ENCODE measurements at regions of chr1 and their contacts with region 1.

Region 1: GRCh38 chr1:28886731-28887418 is 27.5 kb upstream of the EPB41 start:
- DNase-seq: peak; percentile 81 to 95 (median 89)
- ATAC-seq: peak; percentile 73
- H3K4me3 ChIP-seq: peak overlapping the region; percentile 99
- H3K4me3 Mint-ChIP-seq: peak overlapping the region; percentile 95
- H3K27ac ChIP-seq: peak overlapping the region; percentile 57 to 76
- H3K27ac Mint-ChIP-seq: peak overlapping the region; percentile 84
- H3K4me1 ChIP-seq: peaks cover 68% of the 10 kb centered on the region
- H3K4me1 Mint-ChIP-seq: peaks cover 51% of the 10 kb centered on the region
- H3K27me3 ChIP-seq: no peaks in the 10 kb centered on the region
- H3K27me3 Mint-ChIP-seq: peaks cover 5% of the 10 kb centered on the region
- CTCF ChIP-seq: no peak

Region 2: GRCh38 chr1:28926629-28927265 is 39.9 kb after region 1 on chr1:
- CTCF ChIA-PET with region 1: interaction called, 8 read pairs
- POLR2A ChIA-PET with region 1: interaction called, 22 read pairs
- intact Hi-C with region 1: loop called (anchors 2 to 5 kb)
- DNase-seq: peak in 8 of 14 experiments; percentile 28 to 92 (median 40)
- ATAC-seq: peak; percentile 82
- H3K4me3 ChIP-seq: peak overlapping the region; percentile 32
- H3K4me3 Mint-ChIP-seq: peak overlapping the region; percentile 78
- H3K27ac ChIP-seq: peak overlapping the region; percentile 71 to 75
- H3K27ac Mint-ChIP-seq: peak overlapping the region; percentile 85
- H3K4me1 ChIP-seq: peaks cover 68% of the 10 kb centered on the region
- H3K4me1 Mint-ChIP-seq: peaks cover 67% of the 10 kb centered on the region
- H3K27me3 ChIP-seq: no peaks in the 10 kb centered on the region
- H3K27me3 Mint-ChIP-seq: no peaks in the 10 kb centered on the region
- CTCF ChIP-seq: no peak

Region 3: DNA sequence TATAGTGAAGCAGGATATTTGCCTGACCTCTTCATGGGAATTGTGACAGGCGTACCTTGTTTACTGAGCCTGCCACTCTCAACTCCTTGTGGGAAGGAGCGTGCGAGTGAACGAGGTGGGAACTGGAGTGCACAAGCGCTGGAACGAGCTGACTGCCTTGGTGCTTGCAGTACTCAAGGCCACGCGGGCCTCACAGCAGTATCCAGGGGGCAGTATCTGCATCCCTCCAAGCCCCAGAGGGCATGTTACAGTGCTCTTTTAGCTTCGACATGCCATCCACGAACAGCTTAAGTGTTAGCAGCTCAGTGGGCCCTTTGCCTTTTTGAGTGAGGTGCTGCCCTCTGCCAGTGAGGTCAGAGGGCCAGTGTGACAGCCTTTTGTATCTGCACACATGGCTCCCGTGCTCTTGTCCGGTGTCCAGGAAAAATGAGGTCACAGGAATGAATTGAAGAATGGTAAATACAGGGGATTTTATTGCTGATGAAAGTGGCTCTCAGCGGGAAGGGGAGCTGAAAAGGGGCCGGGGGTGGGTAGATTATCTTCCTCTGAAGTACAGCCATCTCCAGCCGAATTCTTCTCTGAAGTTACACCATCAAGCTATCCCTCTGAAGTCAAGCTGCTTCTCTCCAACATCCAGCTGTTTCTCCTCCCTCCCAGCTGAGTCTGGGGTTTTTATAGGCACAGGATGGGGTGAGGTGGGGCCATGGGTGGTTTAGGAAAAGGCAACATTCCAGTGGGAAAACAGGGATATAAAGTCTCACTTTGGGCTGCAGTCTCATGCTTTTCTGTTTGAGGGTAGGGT is 96.8 kb after region 1 on chr1:
- CTCF ChIA-PET with region 1: interaction called, 15 read pairs
- POLR2A ChIA-PET with region 1: interaction called, 3 read pairs
- intact Hi-C with region 1: loop called (anchors 1 to 2 kb)
- DNase-seq: peak in 8 of 14 experiments; percentile 1 to 45 (median 16)
- ATAC-seq: peak; percentile 43
- H3K4me3 ChIP-seq: no peak overlapping the region
- H3K4me3 Mint-ChIP-seq: no peak overlapping the region
- H3K27ac ChIP-seq: no peak overlapping the region
- H3K27ac Mint-ChIP-seq: peak overlapping the region; percentile 5
- H3K4me1 ChIP-seq: peaks cover 34% of the 10 kb centered on the region
- H3K4me1 Mint-ChIP-seq: peaks cover 79% of the 10 kb centered on the region
- H3K27me3 ChIP-seq: no peaks in the 10 kb centered on the region
- H3K27me3 Mint-ChIP-seq: no peaks in the 10 kb centered on the region
- CTCF ChIP-seq: peak; percentile 20

Region 4: DNA sequence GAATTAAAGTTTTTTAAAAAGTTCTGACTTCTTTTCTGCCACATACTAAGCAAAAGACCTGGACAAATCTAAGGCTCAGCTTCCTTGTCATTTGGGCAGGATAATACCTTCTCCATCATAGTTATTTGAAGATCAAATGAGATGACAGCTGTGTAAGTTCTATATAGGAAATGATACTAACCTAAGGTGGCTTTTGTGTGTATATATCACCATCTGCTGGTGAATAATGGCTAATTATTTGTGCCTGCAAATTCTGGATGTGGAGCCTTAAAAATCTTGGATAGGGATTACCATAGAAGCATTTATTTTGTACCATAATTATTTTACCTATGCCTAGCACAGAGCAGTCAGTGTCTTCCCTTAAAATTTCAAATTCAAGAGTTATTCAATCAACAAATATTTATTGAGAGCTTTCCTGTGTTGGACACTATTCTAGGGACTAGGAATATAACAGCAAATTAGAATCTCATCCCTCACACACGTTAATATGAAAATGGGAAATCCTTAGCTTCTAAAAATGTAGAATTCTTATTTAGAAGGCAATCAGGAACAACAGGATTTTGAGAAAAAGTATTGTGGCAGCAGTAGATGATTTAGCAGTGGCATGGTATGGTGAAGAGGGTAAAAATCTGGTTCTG is 147.1 kb after region 1 on chr1:
- CTCF ChIA-PET with region 1: interaction called, 113 read pairs
- POLR2A ChIA-PET with region 1: interaction called, 14 read pairs
- intact Hi-C with region 1: loop called (anchors 1 kb)
- DNase-seq: peak in 3 of 14 experiments; percentile 56 to 62 (median 60)
- ATAC-seq: peak; percentile 57
- H3K4me3 ChIP-seq: no peak overlapping the region
- H3K4me3 Mint-ChIP-seq: no peak overlapping the region
- H3K27ac ChIP-seq: no peak overlapping the region
- H3K27ac Mint-ChIP-seq: no peak overlapping the region
- H3K4me1 ChIP-seq: no peaks in the 10 kb centered on the region
- H3K4me1 Mint-ChIP-seq: peaks cover 8% of the 10 kb centered on the region
- H3K27me3 ChIP-seq: no peaks in the 10 kb centered on the region
- H3K27me3 Mint-ChIP-seq: no peaks in the 10 kb centered on the region
- CTCF ChIP-seq: peak; percentile 78

Region 5: GRCh38 chr1:29124366-29125236 is 237.7 kb after region 1 on chr1:
- CTCF ChIA-PET with region 1: no interaction called
- POLR2A ChIA-PET with region 1: no interaction called
- intact Hi-C with region 1: loop called in 1 of 2 experiments (anchors 2 kb)
- DNase-seq: peak; percentile 20 to 69 (median 42)
- ATAC-seq: peak; percentile 55
- H3K4me3 ChIP-seq: peak overlapping the region; percentile 61
- H3K4me3 Mint-ChIP-seq: peak overlapping the region; percentile 48
- H3K27ac ChIP-seq: no peak overlapping the region
- H3K27ac Mint-ChIP-seq: no peak overlapping the region
- H3K4me1 ChIP-seq: peaks cover 41% of the 10 kb centered on the region
- H3K4me1 Mint-ChIP-seq: peaks cover 8% of the 10 kb centered on the region
- H3K27me3 ChIP-seq: peaks cover 25 to 44% of the 10 kb centered on the region in 2 experiments
- H3K27me3 Mint-ChIP-seq: peaks cover 26% of the 10 kb centered on the region
- CTCF ChIP-seq: no peak

Region 6: GRCh38 chr1:29202584-29203340 is 315.9 kb after region 1 on chr1:
- CTCF ChIA-PET with region 1: interaction called, 5 read pairs
- POLR2A ChIA-PET with region 1: interaction called, 4 read pairs
- intact Hi-C with region 1: loop called (anchors 1 kb)
- DNase-seq: peak; percentile 79 to 94 (median 88)
- ATAC-seq: peak; percentile 93
- H3K4me3 ChIP-seq: no peak overlapping the region
- H3K4me3 Mint-ChIP-seq: no peak overlapping the region
- H3K27ac ChIP-seq: no peak overlapping the region
- H3K27ac Mint-ChIP-seq: no peak overlapping the region
- H3K4me1 ChIP-seq: peaks cover 3% of the 10 kb centered on the region
- H3K4me1 Mint-ChIP-seq: no peaks in the 10 kb centered on the region
- H3K27me3 ChIP-seq: no peaks in the 10 kb centered on the region
- H3K27me3 Mint-ChIP-seq: no peaks in the 10 kb centered on the region
- CTCF ChIP-seq: peak; percentile 88

Measured in CD4-positive, alpha-beta T cell (primary cell).